ENCODE measurements at regions of chr3 and their contacts with region 1.

Region 1: DNA sequence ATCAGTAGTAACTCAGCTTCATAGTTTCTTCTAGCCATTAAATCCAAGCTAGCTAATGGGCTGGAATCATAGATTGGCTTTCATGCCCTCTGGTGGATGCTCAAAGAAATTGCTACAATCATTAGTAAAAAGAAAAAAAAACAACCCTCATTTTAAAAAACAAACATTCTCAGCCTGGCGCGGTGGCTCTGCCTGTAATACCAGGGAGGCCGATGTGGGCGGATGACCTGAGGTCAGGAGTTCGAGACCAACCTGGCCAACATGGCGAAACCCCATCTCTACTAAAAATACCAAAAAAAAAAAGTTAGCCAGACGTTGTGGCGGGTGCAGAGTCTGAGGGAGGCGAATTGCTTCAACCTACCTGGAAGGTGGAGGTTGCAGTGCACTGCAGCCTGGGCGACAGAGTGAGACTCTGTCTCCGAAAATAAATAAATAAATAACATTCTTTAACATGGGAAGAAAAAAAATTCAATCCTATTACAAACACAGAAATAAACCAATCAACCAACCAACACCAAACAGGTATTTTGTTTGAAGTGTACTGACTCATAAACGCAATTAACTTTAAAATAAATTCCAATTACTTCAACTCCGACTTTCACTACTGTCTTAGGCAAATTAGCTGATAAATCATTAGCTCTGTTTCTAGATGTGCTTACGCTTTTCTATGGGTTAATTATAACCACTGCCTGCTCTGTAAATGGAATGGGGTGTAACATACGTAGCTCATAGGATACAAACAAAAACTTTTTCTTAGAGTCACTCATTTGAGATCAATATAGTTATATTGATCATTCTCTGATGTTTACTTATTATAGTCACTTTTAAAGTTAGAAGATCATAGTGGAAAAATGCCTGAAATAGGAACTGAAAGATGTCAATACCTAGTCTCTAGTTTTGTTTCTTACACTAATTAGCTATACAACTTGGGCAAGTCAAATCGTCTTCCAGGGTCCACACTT is 24.9 kb downstream of the TMEM207 start:
- DNase-seq: peak; percentile 18 to 29
- ATAC-seq: peak in 6 of 8 donors; percentile 22 to 60 (median 41)
- H3K4me3 ChIP-seq: no peak overlapping the region
- H3K27ac ChIP-seq: no peak overlapping the region
- H3K4me1 ChIP-seq: peaks cover 0 to 7% (median 0%) of the 10 kb centered on the region in 9 donors
- H3K27me3 ChIP-seq: no peaks in the 10 kb centered on the region
- CTCF ChIP-seq: peak; percentile 26 to 74 (median 67)

Region 2: DNA sequence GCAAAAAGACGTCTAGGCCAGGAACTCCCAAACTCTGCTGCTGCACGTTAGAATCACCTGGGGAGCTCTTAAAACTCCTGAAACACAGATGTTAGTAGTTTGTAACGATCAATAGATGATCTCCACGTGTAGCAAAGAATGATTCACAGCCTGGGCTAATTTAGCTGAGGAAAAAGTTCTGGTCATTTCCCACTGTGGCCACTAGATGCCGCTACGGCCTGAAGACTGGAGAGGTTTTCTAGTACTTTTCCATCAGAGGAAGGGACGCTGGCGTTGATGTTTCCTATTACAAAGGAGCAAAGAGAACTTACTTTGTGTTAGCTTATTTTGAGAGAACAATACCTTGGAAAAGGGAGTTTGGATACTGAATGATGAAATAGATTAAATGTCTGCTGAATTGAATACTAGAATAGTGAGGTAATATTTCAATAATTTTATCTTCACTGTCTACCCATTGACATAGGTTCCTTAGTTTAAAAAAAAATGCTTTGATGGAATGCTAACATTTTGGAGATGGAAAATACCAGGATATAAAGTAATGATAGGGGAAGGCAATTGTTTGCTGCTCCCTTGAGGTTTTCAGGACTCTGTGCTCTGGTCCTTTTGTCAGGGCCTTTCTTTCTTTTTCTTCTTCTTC is 463.1 kb before region 1 on chr3:
- intact Hi-C with region 1: loop called in 4 of 10 experiments (anchors 5 to 10 kb)
- DNase-seq: peak; percentile 60 to 76
- ATAC-seq: peak; percentile 71 to 88 (median 78)
- H3K4me3 ChIP-seq: no peak overlapping the region
- H3K27ac ChIP-seq: peak overlapping the region in 2 of 10 donors; percentile 3 to 19
- H3K4me1 ChIP-seq: peaks cover 0 to 11% (median 5%) of the 10 kb centered on the region in 9 donors
- H3K27me3 ChIP-seq: peaks cover 0 to 19% (median 0%) of the 10 kb centered on the region in 7 donors
- CTCF ChIP-seq: peak; percentile 83 to 96 (median 92)

Region 3: GRCh38 chr3:189975391-189975990 is 449.3 kb before region 1 on chr3:
- intact Hi-C with region 1: loop called in 1 of 10 experiments (anchors 10 kb)
- DNase-seq: no peak
- ATAC-seq: peak in 2 of 8 donors; percentile 19 to 34
- H3K4me3 ChIP-seq: no peak overlapping the region
- H3K27ac ChIP-seq: no peak overlapping the region
- H3K4me1 ChIP-seq: peaks cover 0 to 13% (median 0%) of the 10 kb centered on the region in 9 donors
- H3K27me3 ChIP-seq: no peaks in the 10 kb centered on the region
- CTCF ChIP-seq: no peak

Region 4: GRCh38 chr3:190224863-190225692 is 199.7 kb before region 1 on chr3:
- intact Hi-C with region 1: loop called in 2 of 10 experiments (anchors 10 kb)
- DNase-seq: no peak
- ATAC-seq: no peak
- H3K4me3 ChIP-seq: no peak overlapping the region
- H3K27ac ChIP-seq: no peak overlapping the region
- H3K4me1 ChIP-seq: peaks cover 0 to 5% (median 0%) of the 10 kb centered on the region in 9 donors
- H3K27me3 ChIP-seq: peaks cover 0 to 9% (median 0%) of the 10 kb centered on the region in 7 donors
- CTCF ChIP-seq: peak in 8 of 9 donors; percentile 25 to 60 (median 42)

Region 5: DNA sequence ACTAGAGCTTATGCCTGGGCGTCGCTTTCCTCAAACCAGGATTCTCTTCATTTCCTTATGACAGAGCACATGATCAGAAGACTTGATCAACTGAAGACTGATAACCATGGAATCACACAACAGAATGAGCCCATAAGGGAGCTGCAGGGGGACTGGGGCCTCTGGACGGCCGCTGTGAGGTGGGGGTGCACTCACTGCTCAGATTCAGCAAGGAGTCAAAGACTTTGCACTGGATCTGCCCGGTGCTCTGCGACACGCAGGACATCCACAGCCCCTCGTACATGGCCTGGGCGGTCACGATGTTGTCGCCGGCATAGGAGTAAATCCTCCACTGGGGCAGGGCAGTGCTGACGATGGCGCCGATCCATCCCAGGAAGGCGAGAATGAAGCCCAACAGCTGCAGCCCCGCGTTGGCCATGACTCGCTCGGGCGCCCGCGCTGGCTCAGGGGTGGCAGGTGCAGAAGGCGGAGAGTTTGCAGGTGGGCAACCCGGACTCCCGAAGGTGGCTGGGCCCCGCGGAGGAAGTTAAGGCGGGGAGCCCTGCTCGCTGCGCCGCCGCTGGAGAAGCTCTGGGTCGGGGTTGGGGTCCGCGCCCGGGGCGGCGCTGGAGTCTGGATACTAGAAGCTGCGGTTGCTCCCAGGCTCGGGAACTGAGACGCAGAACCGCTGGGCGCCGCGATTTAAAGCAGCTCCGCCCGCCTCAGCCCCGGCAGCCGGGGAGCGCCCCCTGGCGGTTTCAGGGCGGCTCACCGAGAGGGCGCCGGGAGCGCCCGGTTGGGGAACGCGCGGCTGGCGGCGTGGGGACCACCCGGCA is 102.8 kb before region 1 on chr3 and contains the start of gene CLDN1:
- intact Hi-C with region 1: loop called in 1 of 10 experiments (anchors 5 kb)
- DNase-seq: peak; percentile 72 to 81
- ATAC-seq: peak; percentile 89 to 96 (median 94)
- H3K4me3 ChIP-seq: peak within 1 kb of the TSS; percentile 38 to 68 (median 58)
- H3K27ac ChIP-seq: no peak within 1 kb of the TSS
- H3K4me1 ChIP-seq: peaks cover 0 to 25% (median 12%) of the 10 kb centered on the region in 9 donors
- H3K27me3 ChIP-seq: peaks cover 0 to 33% (median 13%) of the 10 kb centered on the region in 7 donors
- CTCF ChIP-seq: peak in 8 of 9 donors; percentile 91 to 99 (median 96)
- total RNA-seq, gene CLDN1: 0.10 to 0.78 (median 0.17) TPM in 8 of 10 donors, not detected in the others

Region 6: GRCh38 chr3:190330936-190331734 is 93.6 kb before region 1 on chr3:
- intact Hi-C with region 1: loop called in 2 of 10 experiments (anchors 5 kb)
- DNase-seq: no peak
- ATAC-seq: no peak
- H3K4me3 ChIP-seq: no peak overlapping the region
- H3K27ac ChIP-seq: no peak overlapping the region
- H3K4me1 ChIP-seq: peaks cover 0 to 14% (median 4%) of the 10 kb centered on the region in 9 donors
- H3K27me3 ChIP-seq: no peaks in the 10 kb centered on the region
- CTCF ChIP-seq: no peak

Region 7: GRCh38 chr3:190458040-190458439 is 33.3 kb after region 1 on chr3:
- intact Hi-C with region 1: no loop called
- DNase-seq: no peak
- ATAC-seq: no peak
- H3K4me3 ChIP-seq: no peak overlapping the region
- H3K27ac ChIP-seq: no peak overlapping the region
- H3K4me1 ChIP-seq: no peaks in the 10 kb centered on the region
- H3K27me3 ChIP-seq: no peaks in the 10 kb centered on the region
- CTCF ChIP-seq: peak in 1 of 9 donors; percentile 14

Region 8: GRCh38 chr3:190504354-190505125 is 79.8 kb after region 1 on chr3:
- intact Hi-C with region 1: loop called in 1 of 10 experiments (anchors 10 kb)
- DNase-seq: no peak
- ATAC-seq: peak in 6 of 8 donors; percentile 21 to 74 (median 54)
- H3K4me3 ChIP-seq: no peak overlapping the region
- H3K27ac ChIP-seq: peak overlapping the region in 3 of 10 donors; percentile 9 to 45 (median 33)
- H3K4me1 ChIP-seq: peaks cover 0 to 18% (median 0%) of the 10 kb centered on the region in 9 donors
- H3K27me3 ChIP-seq: no peaks in the 10 kb centered on the region
- CTCF ChIP-seq: peak in 3 of 9 donors; percentile 11 to 31 (median 31)

Region 9: GRCh38 chr3:192005989-192006388 is 1581.2 kb after region 1 on chr3:
- intact Hi-C with region 1: no loop called
- DNase-seq: no peak
- ATAC-seq: no peak
- H3K4me3 ChIP-seq: no peak overlapping the region
- H3K27ac ChIP-seq: no peak overlapping the region
- H3K4me1 ChIP-seq: no peaks in the 10 kb centered on the region
- H3K27me3 ChIP-seq: no peaks in the 10 kb centered on the region
- CTCF ChIP-seq: no peak